ENCODE measurements at regions of chr10 and their contacts with region 1.

Region 1: GRCh38 chr10:82206831-82207230 is 331.8 kb downstream of the NRG3 start:
- DNase-seq: no peak

Region 2: GRCh38 chr10:80518807-80519360 is 1687.9 kb before region 1 on chr10:
- intact Hi-C with region 1: no loop called
- DNase-seq: peak in 2 of 10 donors; percentile 61 to 65

Region 3: DNA sequence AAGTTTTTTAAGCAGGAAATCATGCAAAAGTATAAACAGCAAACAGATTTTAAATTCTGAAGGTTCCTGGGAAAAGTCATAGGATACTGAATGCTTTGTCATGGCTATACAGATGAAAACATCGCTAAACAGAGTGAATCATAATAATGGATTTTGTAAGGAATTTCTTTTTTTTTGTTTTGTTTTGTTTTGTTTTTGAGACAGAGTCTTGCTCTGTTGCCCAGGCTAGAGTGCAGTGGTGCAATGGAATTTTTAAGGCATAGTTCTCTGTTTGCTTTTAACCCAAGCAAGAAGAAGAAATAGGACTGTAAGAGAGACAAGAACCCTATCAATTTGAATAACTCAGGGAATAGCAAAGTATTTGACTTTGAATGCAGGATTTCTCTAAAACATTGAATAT is 46.5 kb before region 1 on chr10:
- intact Hi-C with region 1: loop called (anchors 5 kb)
- DNase-seq: no peak